Right lobe of liver (tissue), 6 donors: ENCODE measurements at regions of chr18 and their contacts with region 1.

Region 1: DNA sequence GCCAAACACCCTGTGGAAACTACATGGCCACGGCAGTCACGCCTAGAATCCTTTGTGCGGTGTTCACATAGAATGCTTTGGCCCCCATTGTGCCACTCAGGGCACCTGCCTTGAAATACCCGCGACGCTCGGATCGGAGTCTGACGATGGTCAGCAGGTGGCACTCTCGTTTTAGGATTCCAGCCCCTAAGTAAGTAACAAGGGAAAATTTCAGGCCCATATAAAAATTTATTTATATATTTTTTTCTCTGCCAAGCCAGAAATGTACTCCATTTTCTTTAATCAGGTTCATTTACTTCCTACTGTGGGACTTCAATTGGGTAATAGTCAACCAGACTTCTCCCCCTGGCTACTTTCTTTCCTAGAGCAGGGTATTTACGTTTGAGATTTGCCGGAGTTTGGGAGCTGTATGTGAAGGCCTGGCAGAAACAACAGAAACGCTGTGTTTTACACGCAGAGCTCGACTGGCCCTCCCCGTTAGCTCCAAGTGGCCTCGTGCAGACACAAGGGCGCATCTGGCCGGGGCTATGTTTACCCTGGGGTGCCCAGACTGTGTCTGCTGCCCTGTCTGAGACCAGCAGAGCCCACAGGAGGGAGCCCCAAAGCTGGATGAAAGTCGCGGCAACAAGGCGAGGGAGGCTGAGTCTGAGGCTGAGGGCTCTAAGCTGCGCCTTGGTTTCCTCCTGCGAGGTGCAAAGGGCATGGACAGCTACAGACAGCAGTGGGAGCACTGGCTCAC is 41.6 kb downstream of the LRRC30 start:
- DNase-seq: peak; percentile 59 to 70 (median 66)
- ATAC-seq: peak; percentile 78 to 86 (median 84)
- H3K4me3 ChIP-seq: peak overlapping the region in 1 of 3 donors; percentile 33
- H3K27ac ChIP-seq: peak overlapping the region in 2 of 3 donors; percentile 8 to 44
- H3K4me1 ChIP-seq: peaks cover 0 to 5% (median 0%) of the 10 kb centered on the region in 4 donors
- H3K27me3 ChIP-seq: no peaks in the 10 kb centered on the region
- CTCF ChIP-seq: peak; percentile 39 to 61 (median 60)
- POLR2A ChIP-seq: no peak

Region 2: GRCh38 chr18:7207366-7207915 is 65.0 kb before region 1 on chr18:
- intact Hi-C with region 1: no loop called
- DNase-seq: no peak
- ATAC-seq: no peak
- H3K4me3 ChIP-seq: no peak overlapping the region
- H3K27ac ChIP-seq: no peak overlapping the region
- H3K4me1 ChIP-seq: no peaks in the 10 kb centered on the region
- H3K27me3 ChIP-seq: no peaks in the 10 kb centered on the region
- CTCF ChIP-seq: no peak
- POLR2A ChIP-seq: no peak

Region 3: GRCh38 chr18:8480506-8481328 is 1208.2 kb after region 1 on chr18:
- intact Hi-C with region 1: loop called in 1 of 2 experiments (anchors 5 kb)
- DNase-seq: peak in 1 of 3 donors; percentile 47
- ATAC-seq: peak; percentile 76 to 92 (median 82)
- H3K4me3 ChIP-seq: no peak overlapping the region
- H3K27ac ChIP-seq: no peak overlapping the region
- H3K4me1 ChIP-seq: no peaks in the 10 kb centered on the region
- H3K27me3 ChIP-seq: no peaks in the 10 kb centered on the region
- CTCF ChIP-seq: peak; percentile 52 to 61 (median 57)
- POLR2A ChIP-seq: no peak